K562 (cell line): ENCODE measurements at regions of chr5 and their contacts with region 1.

Region 1: GRCh38 chr5:14664302-14665100 is at the start of gene OTULIN:
- DNase-seq: peak; percentile 95 to 99 (median 98)
- ATAC-seq: peak; percentile 94
- H3K4me3 ChIP-seq: peak within 1 kb of the TSS; percentile 78
- H3K27ac ChIP-seq: peak within 1 kb of the TSS; percentile 81
- H3K4me1 ChIP-seq: peaks cover 14 to 22% of the 10 kb centered on the region in 2 experiments; a peak in 4 of 5 replicates
- H3K27me3 ChIP-seq: no peaks in the 10 kb centered on the region
- CTCF ChIP-seq: no peak
- EP300 ChIP-seq: no peak; the same call in 1 of the 2 replicates
- POLR2A ChIP-seq: peak; percentile 93
- RAD21 ChIP-seq: no peak
- polyA plus RNA-seq, gene OTULIN: 3.3 to 3.5 TPM

Region 2: DNA sequence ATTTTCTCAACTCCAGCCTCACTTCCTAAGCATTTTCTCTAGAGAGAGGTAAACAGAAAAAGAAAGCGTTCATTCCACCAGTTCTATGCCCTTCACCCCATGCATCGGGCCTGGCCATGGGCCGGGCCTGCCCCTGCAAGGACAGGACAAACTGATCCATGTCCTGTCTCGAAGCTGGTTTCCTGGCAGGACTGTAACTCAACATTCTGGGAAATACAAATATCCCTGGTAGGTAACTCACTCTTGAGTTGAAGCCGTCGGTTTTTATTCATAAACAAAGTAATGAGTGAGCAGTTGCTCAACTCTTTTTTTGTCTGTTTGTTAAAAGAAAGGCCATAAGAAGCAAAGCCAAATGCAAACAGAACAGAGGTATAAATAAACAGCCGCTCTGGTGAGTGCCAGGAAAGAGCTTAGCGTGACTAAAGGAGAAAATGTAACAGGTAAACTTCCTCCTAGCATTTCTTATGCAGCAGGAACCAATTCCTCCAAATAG is 655.6 kb before region 1 on chr5:
- CTCF ChIA-PET with region 1: no interaction called
- POLR2A ChIA-PET with region 1: no interaction called
- in situ Hi-C with region 1: loop called (anchors 10 kb)
- intact Hi-C with region 1: no loop called
- DNase-seq: no peak
- ATAC-seq: no peak
- H3K4me3 ChIP-seq: no peak overlapping the region
- H3K27ac ChIP-seq: no peak overlapping the region
- H3K4me1 ChIP-seq: peaks cover 3 to 9% of the 10 kb centered on the region in 2 experiments; a peak in 3 of 5 replicates
- H3K27me3 ChIP-seq: peaks cover 0 to 8% of the 10 kb centered on the region in 2 experiments; a peak in 2 of 5 replicates
- CTCF ChIP-seq: no peak
- EP300 ChIP-seq: no peak
- POLR2A ChIP-seq: no peak
- RAD21 ChIP-seq: no peak

Region 3: DNA sequence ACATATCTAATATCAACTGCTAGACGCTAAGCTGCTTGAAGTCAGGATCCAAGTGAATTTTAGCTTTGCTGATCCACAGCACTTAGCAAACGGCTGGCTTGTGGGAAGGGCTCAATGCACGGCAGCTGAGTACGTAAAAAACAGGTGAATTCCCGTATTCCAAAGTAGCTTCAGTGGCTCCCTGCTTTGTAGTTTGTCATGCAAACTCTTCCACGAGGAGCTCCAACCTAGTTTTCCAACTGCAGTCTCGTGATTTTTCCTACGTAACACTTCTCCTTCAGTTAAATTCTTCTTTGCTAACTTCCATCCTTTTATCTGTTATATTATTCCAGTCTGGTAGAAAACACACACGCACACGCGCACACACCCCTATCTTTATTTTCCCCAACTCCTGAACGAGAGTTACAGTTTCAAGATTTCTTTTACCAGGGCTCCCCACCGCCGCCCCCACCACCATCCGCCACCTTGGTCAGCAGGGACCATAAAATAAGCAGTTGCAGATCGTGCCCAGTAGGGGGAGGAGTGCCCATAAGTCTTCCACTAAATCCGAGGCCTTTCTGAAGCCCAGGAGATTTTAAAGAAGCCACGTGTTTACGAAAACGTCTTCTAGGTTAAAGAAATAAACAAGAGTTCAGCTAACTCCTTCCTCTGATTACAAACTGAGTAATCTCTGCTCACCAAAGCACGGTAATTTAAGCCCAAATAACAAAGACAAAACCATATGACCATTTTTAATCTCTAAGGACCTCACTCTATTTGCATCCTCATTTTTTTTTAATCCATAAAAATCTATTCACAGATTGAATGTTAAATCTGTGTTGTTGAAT is 556.1 kb before region 1 on chr5:
- CTCF ChIA-PET with region 1: no interaction called
- POLR2A ChIA-PET with region 1: no interaction called
- in situ Hi-C with region 1: no loop called
- intact Hi-C with region 1: loop called (anchors 10 kb)
- DNase-seq: peak; percentile 68 to 81 (median 80)
- ATAC-seq: peak; percentile 97
- H3K4me3 ChIP-seq: no peak overlapping the region
- H3K27ac ChIP-seq: no peak overlapping the region
- H3K4me1 ChIP-seq: no peaks in the 10 kb centered on the region
- H3K27me3 ChIP-seq: peaks cover 0 to 6% of the 10 kb centered on the region in 2 experiments; a peak in 3 of 5 replicates
- CTCF ChIP-seq: peak; percentile 64 to 79 (median 73)
- EP300 ChIP-seq: no peak
- POLR2A ChIP-seq: no peak
- RAD21 ChIP-seq: peak; percentile 44 to 61

Region 4: DNA sequence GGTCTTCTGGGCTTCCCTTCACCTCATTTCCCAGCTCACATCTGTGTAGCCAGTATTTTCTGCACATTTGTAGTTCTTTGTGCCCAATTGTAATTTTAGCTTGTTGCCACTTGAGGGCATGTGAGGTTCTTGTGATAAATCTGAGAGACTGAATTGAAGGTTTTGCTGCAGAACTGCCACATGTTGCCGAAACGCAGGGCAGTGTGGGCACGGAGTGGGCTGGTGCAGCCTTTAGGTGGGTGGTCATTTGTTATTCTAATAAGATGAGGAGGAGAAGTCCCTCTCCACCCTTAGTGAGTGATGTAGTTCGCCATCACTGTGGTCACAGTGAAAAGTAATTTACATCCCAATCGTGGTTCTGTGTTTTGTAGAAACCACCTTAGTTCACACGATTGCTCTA is 21.3 kb after region 1 on chr5:
- CTCF ChIA-PET with region 1: no interaction called
- POLR2A ChIA-PET with region 1: no interaction called
- in situ Hi-C with region 1: no loop called
- intact Hi-C with region 1: no loop called
- DNase-seq: peak in 2 of 4 experiments; percentile 38 to 47
- ATAC-seq: peak; percentile 80
- H3K4me3 ChIP-seq: no peak overlapping the region
- H3K27ac ChIP-seq: no peak overlapping the region
- H3K4me1 ChIP-seq: no peaks in the 10 kb centered on the region
- H3K27me3 ChIP-seq: no peaks in the 10 kb centered on the region
- CTCF ChIP-seq: peak; percentile 53 to 75 (median 71); a peak in 5 of 6 replicates
- EP300 ChIP-seq: no peak
- POLR2A ChIP-seq: no peak
- RAD21 ChIP-seq: peak; percentile 71 to 76

Region 5: GRCh38 chr5:14727428-14727865 is 62.9 kb after region 1 on chr5:
- CTCF ChIA-PET with region 1: no interaction called
- POLR2A ChIA-PET with region 1: no interaction called
- in situ Hi-C with region 1: no loop called
- intact Hi-C with region 1: no loop called
- DNase-seq: peak; percentile 72 to 84 (median 81)
- ATAC-seq: peak; percentile 89
- H3K4me3 ChIP-seq: no peak overlapping the region
- H3K27ac ChIP-seq: no peak overlapping the region
- H3K4me1 ChIP-seq: peaks cover 3 to 5% of the 10 kb centered on the region in 2 experiments; a peak in 3 of 5 replicates
- H3K27me3 ChIP-seq: peaks cover 20 to 57% of the 10 kb centered on the region in 2 experiments
- CTCF ChIP-seq: peak; percentile 91 to 97 (median 97)
- EP300 ChIP-seq: no peak
- POLR2A ChIP-seq: no peak
- RAD21 ChIP-seq: peak; percentile 98 to 99